HepG2 (cell line): ENCODE measurements at regions of chr18 and their contacts with region 1.

Region 1: DNA sequence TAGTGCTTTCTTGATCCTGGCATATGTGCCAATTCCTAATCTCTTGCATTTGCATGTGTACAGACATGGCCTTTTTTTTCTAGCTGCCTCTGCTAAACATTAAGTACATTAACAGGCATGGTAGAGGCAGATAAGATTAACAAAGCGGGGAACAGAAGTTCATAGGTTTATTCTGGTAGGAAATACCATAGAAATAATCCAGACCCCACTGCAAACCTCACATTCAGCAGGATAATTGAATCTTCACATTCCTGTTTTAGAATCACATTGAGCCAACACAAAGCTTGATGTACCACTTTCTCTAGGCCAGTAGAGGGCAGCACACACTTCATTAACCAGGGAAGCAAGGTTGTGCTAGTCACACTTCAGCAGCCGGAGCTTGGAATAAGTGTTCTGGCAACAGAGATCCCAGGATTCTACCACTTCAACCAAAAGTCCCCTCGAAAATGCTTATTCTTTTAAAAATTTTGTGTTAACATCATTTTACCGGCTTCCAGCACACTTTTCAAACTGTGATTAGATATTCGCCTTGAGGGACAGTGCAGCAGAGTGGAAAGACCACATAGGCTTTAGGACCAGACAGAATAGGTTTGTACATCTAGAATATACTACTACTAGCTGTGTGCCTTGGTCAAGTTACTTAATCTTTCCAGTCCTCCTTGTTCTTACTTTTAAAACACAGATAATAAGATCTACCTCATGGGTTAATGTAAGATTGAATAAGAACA is 420.2 kb upstream of the CHST9 start:
- DNase-seq: peak; percentile 53
- ATAC-seq: peak; percentile 92
- H3K4me3 ChIP-seq: no peak overlapping the region
- H3K27ac ChIP-seq: no peak overlapping the region
- H3K4me1 ChIP-seq: no peaks in the 10 kb centered on the region
- H3K27me3 ChIP-seq: no peaks in the 10 kb centered on the region
- CTCF ChIP-seq: peak; percentile 85
- EP300 ChIP-seq: no peak
- POLR2A ChIP-seq: no peak
- RAD21 ChIP-seq: 0 out of 2 replicates have a peak, but pooled peaks have one; percentile 21

Region 2: DNA sequence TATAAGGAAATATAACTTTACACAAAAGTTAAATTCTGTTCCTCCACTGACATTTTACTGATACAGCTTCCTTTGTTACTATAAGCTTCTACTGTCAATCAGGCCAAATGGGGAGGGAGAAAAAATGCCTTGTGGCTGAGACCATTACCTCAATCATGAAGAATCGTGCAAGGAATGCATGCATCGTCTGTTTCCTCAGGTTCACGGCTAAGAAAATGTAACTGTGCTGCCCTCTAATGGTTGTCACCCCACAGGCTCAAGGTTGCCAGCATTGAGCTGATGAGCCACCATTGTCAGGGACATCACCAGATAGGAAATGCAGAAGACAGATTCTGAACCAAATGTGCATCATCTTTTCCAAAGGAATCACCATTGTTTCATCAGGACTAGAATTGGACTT is 144.7 kb after region 1 on chr18:
- CTCF ChIA-PET with region 1: no interaction called
- POLR2A ChIA-PET with region 1: no interaction called
- in situ Hi-C with region 1: no loop called
- intact Hi-C with region 1: loop called (anchors 1 kb)
- DNase-seq: peak; percentile 16
- ATAC-seq: peak; percentile 75
- H3K4me3 ChIP-seq: no peak overlapping the region
- H3K27ac ChIP-seq: no peak overlapping the region
- H3K4me1 ChIP-seq: no peaks in the 10 kb centered on the region
- H3K27me3 ChIP-seq: no peaks in the 10 kb centered on the region
- CTCF ChIP-seq: peak; percentile 62
- EP300 ChIP-seq: no peak
- POLR2A ChIP-seq: no peak
- RAD21 ChIP-seq: 0 out of 2 replicates have a peak, but pooled peaks have one; percentile 31